ENCODE measurements at regions of chr17 and their contacts with region 1.

Region 1: GRCh38 chr17:81101614-81102306 is 63.5 kb upstream of the PVALEF start:
- DNase-seq: no peak
- H3K4me3 ChIP-seq: no peak overlapping the region
- H3K27ac ChIP-seq: no peak overlapping the region
- H3K4me1 ChIP-seq: peaks cover 18 to 39% (median 28%) of the 10 kb centered on the region in 4 donors
- H3K27me3 ChIP-seq: no peaks in the 10 kb centered on the region
- CTCF ChIP-seq: peak; percentile 99 to 100 (median 100)
- EP300 ChIP-seq: no peak
- POLR2A ChIP-seq: no peak

Region 2: GRCh38 chr17:80991645-80992076 is 110.1 kb before region 1 on chr17 and contains the start of gene CHMP6:
- intact Hi-C with region 1: loop called (anchors 2 kb)
- DNase-seq: no peak
- H3K4me3 ChIP-seq: peak within 1 kb of the TSS; percentile 94 to 100 (median 98)
- H3K27ac ChIP-seq: peak within 1 kb of the TSS; percentile 52 to 76 (median 74)
- H3K4me1 ChIP-seq: peaks cover 31 to 65% (median 61%) of the 10 kb centered on the region in 4 donors
- H3K27me3 ChIP-seq: no peaks in the 10 kb centered on the region
- CTCF ChIP-seq: peak; percentile 39 to 75 (median 44)
- EP300 ChIP-seq: no peak
- POLR2A ChIP-seq: no peak
- total RNA-seq, gene CHMP6: 17.6 to 29.2 (median 25.8) TPM

Region 3: GRCh38 chr17:81018044-81018802 is 83.5 kb before region 1 on chr17:
- intact Hi-C with region 1: loop called (anchors 1 kb)
- DNase-seq: no peak
- H3K4me3 ChIP-seq: peak overlapping the region; percentile 39 to 54 (median 42)
- H3K27ac ChIP-seq: peak overlapping the region; percentile 58 to 75 (median 72)
- H3K4me1 ChIP-seq: peaks cover 25 to 51% (median 42%) of the 10 kb centered on the region in 4 donors
- H3K27me3 ChIP-seq: no peaks in the 10 kb centered on the region
- CTCF ChIP-seq: no peak
- EP300 ChIP-seq: no peak
- POLR2A ChIP-seq: no peak

Region 4: GRCh38 chr17:81253358-81254131 is 151.8 kb after region 1 on chr17:
- intact Hi-C with region 1: no loop called
- DNase-seq: no peak
- H3K4me3 ChIP-seq: no peak overlapping the region
- H3K27ac ChIP-seq: peak overlapping the region; percentile 85 to 91 (median 88)
- H3K4me1 ChIP-seq: peaks cover 14 to 57% (median 47%) of the 10 kb centered on the region in 4 donors
- H3K27me3 ChIP-seq: no peaks in the 10 kb centered on the region
- CTCF ChIP-seq: peak; percentile 88 to 92 (median 90)
- EP300 ChIP-seq: no peak
- POLR2A ChIP-seq: no peak

Region 5: DNA sequence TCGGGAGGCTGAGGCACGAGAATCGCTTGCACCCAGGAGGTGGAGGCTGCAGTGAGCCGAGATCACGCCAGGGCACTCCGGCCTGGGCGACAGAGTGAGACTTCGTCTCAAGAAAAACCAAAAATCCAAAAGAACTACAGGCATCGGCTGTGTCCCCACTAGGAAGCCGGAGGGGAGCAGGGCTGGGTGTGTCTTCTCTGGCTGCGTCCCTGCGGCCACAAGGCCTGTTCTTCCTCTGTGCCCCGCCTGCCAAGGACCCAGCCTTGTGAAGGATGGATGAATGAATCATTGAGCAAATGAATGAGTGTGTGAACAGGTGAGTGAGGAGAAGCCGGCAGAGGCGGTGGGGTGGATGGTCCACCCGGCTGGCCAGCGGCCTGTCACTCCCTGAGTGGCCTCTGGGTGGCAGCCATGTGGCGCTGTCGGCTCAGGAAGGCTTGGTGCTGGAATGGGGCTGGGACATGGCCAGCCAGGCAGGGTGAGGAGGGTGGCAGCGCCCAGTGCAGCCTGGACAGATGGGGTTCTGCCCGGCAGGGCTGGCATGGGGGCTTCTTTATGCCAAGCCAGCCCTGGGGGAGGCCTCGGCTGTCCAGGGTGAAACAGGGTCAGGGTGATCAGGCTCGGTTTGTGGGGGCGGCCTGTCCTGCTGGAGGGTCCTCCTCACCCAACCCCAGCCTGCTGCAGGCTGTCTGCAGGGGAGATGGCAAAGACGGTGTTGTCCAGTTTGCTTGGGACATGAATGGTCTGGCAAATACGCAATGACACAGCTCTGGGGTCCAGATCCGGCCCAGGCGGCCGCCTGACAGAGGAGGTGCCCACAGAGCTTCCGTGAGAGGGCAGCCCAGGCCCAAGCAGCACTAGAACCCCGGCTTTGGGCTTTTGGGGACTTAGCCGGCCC is 632.0 kb after region 1 on chr17:
- intact Hi-C with region 1: no loop called
- DNase-seq: peak; percentile 94
- H3K4me3 ChIP-seq: no peak overlapping the region
- H3K27ac ChIP-seq: no peak overlapping the region
- H3K4me1 ChIP-seq: peaks cover 0 to 10% (median 0%) of the 10 kb centered on the region in 4 donors
- H3K27me3 ChIP-seq: peaks cover 0 to 84% (median 7%) of the 10 kb centered on the region in 4 donors
- CTCF ChIP-seq: peak; percentile 76 to 96 (median 87)
- EP300 ChIP-seq: no peak
- POLR2A ChIP-seq: no peak